HepG2 (cell line): ENCODE measurements at regions of chr12 and their contacts with region 1.

Region 1: DNA sequence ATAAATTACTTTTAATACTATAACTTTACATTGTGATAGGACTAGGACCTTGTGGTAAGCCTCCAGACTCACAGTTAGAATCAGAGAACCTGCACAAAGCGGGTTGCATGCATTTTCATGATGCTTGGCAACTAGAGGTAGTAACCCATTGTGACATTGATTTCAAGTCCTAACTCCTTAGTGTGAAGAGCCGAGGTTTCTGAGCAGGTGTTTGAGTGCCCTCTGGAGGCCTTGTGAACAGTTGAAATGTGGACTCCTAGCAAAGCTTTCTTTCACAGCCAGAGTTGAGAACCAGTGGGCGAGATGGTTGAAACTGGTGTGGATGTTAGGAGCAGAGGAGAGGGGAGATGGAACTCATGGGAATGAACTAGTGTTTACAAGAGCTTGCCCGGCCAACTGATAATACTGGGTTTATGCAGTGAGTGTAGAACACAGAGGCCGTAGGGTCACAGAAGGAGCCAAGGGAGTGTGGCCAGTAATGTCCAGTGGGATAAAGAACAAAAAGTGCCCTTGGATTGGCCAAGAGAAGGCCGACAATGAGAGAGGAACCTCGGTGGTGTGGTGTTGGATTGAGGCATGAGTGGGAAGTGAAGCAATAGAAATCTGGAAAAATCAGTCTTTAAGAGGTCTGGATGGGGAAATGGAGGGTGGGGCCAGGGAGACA is 10.9 kb downstream of the ZNF664 start:
- DNase-seq: peak; percentile 74
- ATAC-seq: peak; percentile 91
- H3K4me3 ChIP-seq: no peak overlapping the region
- H3K27ac ChIP-seq: no peak overlapping the region
- H3K4me1 ChIP-seq: peaks cover 10% of the 10 kb centered on the region
- H3K27me3 ChIP-seq: no peaks in the 10 kb centered on the region
- CTCF ChIP-seq: peak; percentile 77
- EP300 ChIP-seq: no peak
- POLR2A ChIP-seq: no peak
- RAD21 ChIP-seq: no peak; the same call in 1 of the 2 replicates

Region 2: DNA sequence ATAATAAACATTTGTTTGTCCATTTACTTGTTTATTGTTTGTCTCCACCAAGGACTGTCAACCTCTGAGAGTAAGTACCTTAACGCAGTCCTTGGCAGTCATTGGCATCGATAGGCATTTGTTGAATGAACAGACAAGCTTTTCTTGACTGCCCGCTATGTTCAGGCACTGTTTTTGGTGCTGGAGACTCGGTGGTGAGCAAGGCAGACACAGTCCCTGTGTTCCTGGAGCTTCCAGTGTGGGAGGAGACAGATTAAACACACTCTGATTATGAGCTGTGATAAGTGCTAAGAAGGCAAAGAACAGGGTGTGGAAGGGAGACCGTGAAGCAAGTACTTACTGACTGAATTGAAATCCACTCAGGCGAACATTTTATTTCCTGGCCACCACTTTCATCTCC is 270.6 kb before region 1 on chr12:
- CTCF ChIA-PET with region 1: no interaction called
- POLR2A ChIA-PET with region 1: no interaction called
- in situ Hi-C with region 1: no loop called
- intact Hi-C with region 1: loop called (anchors 10 kb)
- DNase-seq: peak; percentile 16
- ATAC-seq: no peak
- H3K4me3 ChIP-seq: peak overlapping the region; percentile 88 to 96 (median 94)
- H3K27ac ChIP-seq: peak overlapping the region; percentile 49
- H3K4me1 ChIP-seq: peaks cover 25% of the 10 kb centered on the region
- H3K27me3 ChIP-seq: no peaks in the 10 kb centered on the region
- CTCF ChIP-seq: no peak
- EP300 ChIP-seq: no peak
- POLR2A ChIP-seq: no peak
- RAD21 ChIP-seq: no peak

Region 3: GRCh38 chr12:123801573-123802178 is 182.3 kb before region 1 on chr12:
- CTCF ChIA-PET with region 1: interaction called, 4 read pairs
- POLR2A ChIA-PET with region 1: no interaction called
- in situ Hi-C with region 1: no loop called
- intact Hi-C with region 1: loop called (anchors 1 kb)
- DNase-seq: no peak
- ATAC-seq: no peak
- H3K4me3 ChIP-seq: no peak overlapping the region
- H3K27ac ChIP-seq: no peak overlapping the region
- H3K4me1 ChIP-seq: no peaks in the 10 kb centered on the region; the same call in 1 of the 2 replicates
- H3K27me3 ChIP-seq: peaks cover 0 to 2% of the 10 kb centered on the region in 2 experiments; a peak in 2 of 5 replicates
- CTCF ChIP-seq: peak; percentile 35
- EP300 ChIP-seq: no peak
- POLR2A ChIP-seq: no peak
- RAD21 ChIP-seq: no peak

Region 4: GRCh38 chr12:123808167-123808566 is 175.8 kb before region 1 on chr12:
- CTCF ChIA-PET with region 1: interaction called, 3 read pairs
- POLR2A ChIA-PET with region 1: no interaction called
- in situ Hi-C with region 1: no loop called
- intact Hi-C with region 1: loop called (anchors 2 kb)
- DNase-seq: peak; percentile 16
- ATAC-seq: peak; percentile 88
- H3K4me3 ChIP-seq: no peak overlapping the region
- H3K27ac ChIP-seq: no peak overlapping the region
- H3K4me1 ChIP-seq: no peaks in the 10 kb centered on the region
- H3K27me3 ChIP-seq: peaks cover 0 to 3% of the 10 kb centered on the region in 2 experiments; a peak in 1 of 5 replicates
- CTCF ChIP-seq: peak; percentile 66
- EP300 ChIP-seq: no peak
- POLR2A ChIP-seq: no peak
- RAD21 ChIP-seq: peak; percentile 28; the same call in 1 of the 2 replicates

Region 5: DNA sequence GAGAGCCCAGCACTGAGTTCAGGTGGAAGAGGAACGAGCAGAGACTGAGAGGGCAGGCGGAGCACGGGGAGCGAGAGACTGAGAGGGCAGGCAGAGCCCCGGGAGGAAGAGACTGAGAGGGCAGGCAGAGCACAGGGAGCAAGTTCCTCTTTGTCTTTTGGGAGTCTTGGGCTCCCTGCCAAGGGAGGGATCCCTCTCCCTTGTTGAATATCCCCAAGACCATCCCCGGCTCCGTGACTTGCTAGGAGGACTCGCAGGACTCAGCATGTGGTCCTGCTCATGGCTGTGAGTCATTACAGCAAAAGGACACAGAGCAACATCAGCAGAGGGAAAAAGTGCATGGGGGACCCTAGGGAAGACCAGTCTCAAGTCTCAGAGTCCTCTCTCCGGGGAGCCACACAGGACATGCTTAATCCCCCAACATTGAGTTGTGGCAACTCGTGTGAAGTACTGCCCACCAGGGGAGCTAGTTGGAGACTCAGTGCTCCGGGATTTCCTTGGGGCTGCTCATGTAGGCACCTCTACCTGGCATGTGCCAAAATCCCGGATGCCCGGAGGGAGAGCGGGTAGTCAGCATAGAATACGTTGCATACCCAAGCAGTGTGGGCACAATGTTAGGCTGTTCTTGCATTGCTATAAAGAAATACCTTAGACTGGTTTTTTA is 92.3 kb before region 1 on chr12:
- CTCF ChIA-PET with region 1: no interaction called
- POLR2A ChIA-PET with region 1: no interaction called
- in situ Hi-C with region 1: no loop called
- intact Hi-C with region 1: no loop called
- DNase-seq: no peak
- ATAC-seq: peak; percentile 34; the same call in 1 of the 3 replicates
- H3K4me3 ChIP-seq: no peak overlapping the region
- H3K27ac ChIP-seq: no peak overlapping the region
- H3K4me1 ChIP-seq: peaks cover 24% of the 10 kb centered on the region
- H3K27me3 ChIP-seq: peaks cover 17 to 66% of the 10 kb centered on the region in 2 experiments
- CTCF ChIP-seq: no peak
- EP300 ChIP-seq: no peak
- POLR2A ChIP-seq: no peak
- RAD21 ChIP-seq: no peak

Region 6: DNA sequence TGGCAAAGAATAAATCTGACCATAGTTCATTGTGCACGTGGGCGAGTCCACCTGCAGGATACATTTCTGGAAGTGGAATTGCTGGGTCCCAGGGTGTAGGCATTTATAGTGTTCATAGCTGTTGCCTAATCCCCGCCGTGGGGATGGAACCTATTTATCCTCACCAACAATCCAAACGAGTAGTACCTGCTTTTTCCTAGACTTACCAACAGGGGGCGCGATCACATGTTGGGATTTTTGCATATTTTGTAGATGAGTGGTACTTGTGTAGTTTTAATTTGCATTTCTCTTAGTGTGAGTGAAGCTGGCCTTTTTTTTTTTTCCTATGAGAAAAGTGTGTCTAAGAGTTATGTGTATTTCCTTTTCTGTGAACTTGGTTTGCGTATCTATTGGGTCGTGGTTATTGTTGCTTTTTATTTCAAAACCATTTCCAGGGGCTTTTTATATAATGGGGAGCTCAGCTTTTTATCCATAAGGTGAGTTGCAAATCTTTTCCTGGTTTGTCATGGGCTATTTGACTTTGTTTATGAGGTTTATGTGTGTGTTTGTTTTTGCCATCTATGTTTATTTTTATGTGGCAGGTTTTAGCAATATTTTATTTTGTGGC is 78.5 kb before region 1 on chr12:
- CTCF ChIA-PET with region 1: interaction called, 21 read pairs
- POLR2A ChIA-PET with region 1: no interaction called
- in situ Hi-C with region 1: no loop called
- intact Hi-C with region 1: loop called (anchors 1 kb)
- DNase-seq: peak; percentile 59
- ATAC-seq: no peak; the same call in 2 of the 3 replicates
- H3K4me3 ChIP-seq: no peak overlapping the region
- H3K27ac ChIP-seq: no peak overlapping the region
- H3K4me1 ChIP-seq: peaks cover 20% of the 10 kb centered on the region
- H3K27me3 ChIP-seq: peaks cover 2 to 26% of the 10 kb centered on the region in 2 experiments; a peak in 4 of 5 replicates
- CTCF ChIP-seq: peak; percentile 71
- EP300 ChIP-seq: no peak
- POLR2A ChIP-seq: no peak
- RAD21 ChIP-seq: no peak

Region 7: GRCh38 chr12:123958462-123958861 is 25.5 kb before region 1 on chr12:
- CTCF ChIA-PET with region 1: no interaction called
- POLR2A ChIA-PET with region 1: no interaction called
- in situ Hi-C with region 1: no loop called
- intact Hi-C with region 1: no loop called
- DNase-seq: no peak
- ATAC-seq: no peak
- H3K4me3 ChIP-seq: no peak overlapping the region
- H3K27ac ChIP-seq: no peak overlapping the region
- H3K4me1 ChIP-seq: no peaks in the 10 kb centered on the region
- H3K27me3 ChIP-seq: no peaks in the 10 kb centered on the region
- CTCF ChIP-seq: no peak
- EP300 ChIP-seq: no peak
- POLR2A ChIP-seq: no peak
- RAD21 ChIP-seq: no peak